Activated CD8-positive, alpha-beta T cell treated with anti-CD3 and anti-CD28 coated beads for 36 hours (primary cell): ENCODE measurements at regions of chr11 and their contacts with region 1.

Region 1: GRCh38 chr11:10735481-10736475 is 15.3 kb upstream of the CTR9 start:
- DNase-seq: peak; percentile 96
- ATAC-seq: peak; percentile 100
- H3K4me3 Mint-ChIP-seq: no peak overlapping the region
- H3K27ac Mint-ChIP-seq: no peak overlapping the region
- H3K4me1 Mint-ChIP-seq: peaks cover 9% of the 10 kb centered on the region
- H3K27me3 Mint-ChIP-seq: peaks cover 1% of the 10 kb centered on the region
- CTCF ChIP-seq: peak; percentile 92

Region 2: DNA sequence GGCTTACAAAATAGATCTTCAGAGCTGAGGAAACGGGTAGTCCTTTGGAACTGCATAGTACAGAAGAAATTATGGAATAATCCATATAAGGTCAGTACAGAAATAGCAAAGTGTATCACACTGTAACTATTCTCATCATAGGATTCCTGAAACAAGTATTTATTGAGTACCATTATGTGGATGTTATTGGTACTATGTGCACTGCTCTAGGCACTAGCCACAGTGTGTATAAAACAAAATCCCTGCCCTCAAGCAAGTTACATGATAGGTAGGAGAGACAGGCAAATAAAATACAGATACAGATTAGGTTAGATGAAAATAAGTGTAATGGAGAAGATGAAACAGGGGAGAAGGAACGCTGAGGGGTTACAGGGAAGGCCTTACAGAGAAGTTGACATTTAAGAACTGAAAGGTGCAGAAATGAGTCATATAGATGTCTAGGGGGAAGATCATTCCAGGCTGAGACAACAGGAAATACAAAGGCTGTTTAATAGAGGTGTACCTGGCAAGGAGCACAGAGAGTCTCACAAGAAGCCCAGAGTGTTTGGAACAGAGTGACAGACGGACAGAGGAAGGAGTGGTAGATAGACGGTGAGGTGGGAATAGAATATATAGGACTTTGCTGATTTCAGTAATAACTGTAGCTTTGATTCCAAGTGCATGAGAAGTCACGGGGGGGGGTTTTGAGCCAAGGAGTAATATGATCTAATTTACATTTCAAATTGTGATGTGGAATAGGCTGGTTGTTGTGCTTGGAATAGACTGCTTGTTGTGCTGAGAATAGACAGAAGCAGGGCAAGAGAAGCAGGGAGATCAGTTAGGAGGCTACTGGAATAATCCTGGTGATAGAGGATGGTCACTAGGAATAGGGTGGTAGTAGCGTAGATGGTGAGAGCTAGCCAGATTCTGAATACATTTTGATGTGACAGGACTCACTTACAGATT is 208.5 kb before region 1 on chr11:
- CTCF ChIA-PET with region 1: no interaction called
- POLR2A ChIA-PET with region 1: no interaction called
- intact Hi-C with region 1: loop called (anchors 10 kb)
- DNase-seq: peak; percentile 15
- ATAC-seq: peak; percentile 97
- H3K4me3 Mint-ChIP-seq: peak overlapping the region; percentile 3
- H3K27ac Mint-ChIP-seq: peak overlapping the region; percentile 80
- H3K4me1 Mint-ChIP-seq: peaks cover 20% of the 10 kb centered on the region
- H3K27me3 Mint-ChIP-seq: no peaks in the 10 kb centered on the region
- CTCF ChIP-seq: no peak